H1 (cell line): ENCODE measurements at regions of chr6 and their contacts with region 1.

Region 1: GRCh38 chr6:75893058-75893775 is 144.2 kb downstream of the MYO6 start:
- DNase-seq: no peak
- H3K4me3 ChIP-seq: no peak overlapping the region
- H3K27ac ChIP-seq: no peak overlapping the region
- H3K4me1 ChIP-seq: no peaks in the 10 kb centered on the region
- H3K27me3 ChIP-seq: no peaks in the 10 kb centered on the region
- CTCF ChIP-seq: peak in 2 of 3 experiments; percentile 37 to 68; a peak in 2 of 4 replicates
- EP300 ChIP-seq: no peak
- POLR2A ChIP-seq: no peak
- RAD21 ChIP-seq: peak; percentile 80 to 84

Region 2: DNA sequence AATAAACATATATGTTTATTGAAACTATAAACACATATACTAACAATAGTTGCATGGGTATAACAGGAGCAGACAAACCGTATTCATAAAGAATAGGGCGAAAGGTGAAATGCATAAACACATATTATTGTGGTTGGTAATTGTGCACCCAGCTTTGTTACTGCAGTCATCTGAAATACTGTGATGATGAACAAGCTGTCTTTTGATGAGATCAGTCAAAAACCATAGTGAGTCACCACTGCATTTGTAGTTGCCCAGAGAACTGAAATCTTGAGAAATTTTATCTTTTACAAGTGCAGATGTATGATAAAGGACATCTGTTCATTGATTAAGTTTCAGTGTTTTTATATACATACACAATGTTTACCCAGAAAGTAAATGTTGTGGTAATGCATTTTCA is 10.5 kb before region 1 on chr6:
- CTCF ChIA-PET with region 1: interaction called, 18 read pairs
- POLR2A ChIA-PET with region 1: no interaction called
- DNase-seq: no peak
- H3K4me3 ChIP-seq: no peak overlapping the region
- H3K27ac ChIP-seq: no peak overlapping the region
- H3K4me1 ChIP-seq: no peaks in the 10 kb centered on the region
- H3K27me3 ChIP-seq: no peaks in the 10 kb centered on the region
- CTCF ChIP-seq: no peak
- EP300 ChIP-seq: no peak
- POLR2A ChIP-seq: no peak
- RAD21 ChIP-seq: no peak

Region 3: DNA sequence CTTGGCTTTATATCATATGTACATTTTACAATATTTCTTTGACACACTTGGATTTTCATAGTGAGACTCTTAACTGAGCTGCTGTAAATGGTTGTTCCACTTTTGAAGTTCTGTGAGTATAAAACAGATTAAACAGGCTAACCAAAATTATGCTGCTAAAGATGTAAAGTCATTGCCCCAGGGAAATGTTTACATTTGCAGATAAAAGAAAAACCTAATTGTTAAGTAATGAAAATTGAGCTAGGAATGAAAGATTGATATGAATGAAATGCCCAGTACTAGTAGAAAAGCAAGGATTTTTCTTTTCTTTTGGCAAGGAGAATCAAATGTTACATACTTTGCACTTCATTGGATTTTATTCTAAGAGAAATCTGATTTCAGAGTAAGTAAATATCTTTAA is 19.8 kb after region 1 on chr6:
- CTCF ChIA-PET with region 1: interaction called, 22 read pairs
- POLR2A ChIA-PET with region 1: interaction called, 3 read pairs
- DNase-seq: no peak
- H3K4me3 ChIP-seq: no peak overlapping the region
- H3K27ac ChIP-seq: no peak overlapping the region
- H3K4me1 ChIP-seq: peaks cover 0 to 3% (median 0%) of the 10 kb centered on the region in 4 experiments; a peak in 1 of 7 replicates
- H3K27me3 ChIP-seq: no peaks in the 10 kb centered on the region
- CTCF ChIP-seq: no peak
- EP300 ChIP-seq: no peak
- POLR2A ChIP-seq: no peak
- RAD21 ChIP-seq: no peak

Region 4: DNA sequence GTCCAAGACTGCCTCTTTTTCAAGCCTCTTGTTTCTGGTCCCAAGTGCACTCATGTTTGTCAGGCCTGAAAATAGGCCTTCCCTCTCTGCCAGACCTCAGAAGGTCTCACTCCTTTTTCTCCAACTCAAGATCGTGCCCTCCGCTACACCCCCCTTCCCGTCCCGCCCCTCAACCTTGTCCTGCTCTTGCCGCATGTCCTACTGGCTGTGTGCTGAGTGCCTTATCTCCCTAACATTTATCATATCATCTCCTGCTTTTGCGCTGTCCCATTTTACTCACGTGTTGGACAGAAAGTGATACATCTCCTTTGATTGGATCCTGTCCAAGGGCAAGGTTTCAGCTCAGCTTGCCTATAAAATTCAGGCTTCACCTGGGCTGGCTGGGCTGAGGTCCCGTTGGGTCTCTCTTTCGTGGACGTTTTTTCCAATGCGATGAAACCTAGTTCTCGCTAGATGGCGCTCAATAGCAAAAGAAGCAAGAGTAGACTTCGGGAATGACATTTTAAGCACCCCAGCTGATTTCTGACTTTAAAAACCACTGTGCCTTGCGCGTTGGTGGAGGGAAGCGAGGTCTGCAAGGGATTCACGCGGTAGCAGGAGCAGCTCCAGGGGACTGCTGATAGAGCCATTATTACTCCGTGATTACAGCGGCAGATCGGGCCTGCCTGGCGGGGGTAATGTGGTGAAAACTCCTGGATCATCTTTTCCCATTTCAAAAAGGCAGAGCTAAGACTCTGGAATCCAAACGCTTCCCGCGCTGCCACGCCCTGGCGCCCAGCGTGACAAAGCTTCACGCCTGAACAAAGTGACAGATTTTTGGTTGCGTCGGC is 41.6 kb after region 1 on chr6:
- CTCF ChIA-PET with region 1: interaction called, 84 read pairs
- POLR2A ChIA-PET with region 1: no interaction called
- DNase-seq: peak in 1 of 2 experiments; percentile 71
- H3K4me3 ChIP-seq: peak overlapping the region; percentile 5 to 61 (median 48); a peak in 7 of 8 replicates
- H3K27ac ChIP-seq: no peak overlapping the region
- H3K4me1 ChIP-seq: peaks cover 0 to 2% (median 0%) of the 10 kb centered on the region in 4 experiments; a peak in 2 of 7 replicates
- H3K27me3 ChIP-seq: peaks cover 0 to 9% (median 2%) of the 10 kb centered on the region in 4 experiments; a peak in 3 of 7 replicates
- CTCF ChIP-seq: peak; percentile 29 to 86 (median 83)
- EP300 ChIP-seq: no peak
- POLR2A ChIP-seq: no peak
- RAD21 ChIP-seq: peak; percentile 92 to 96